ENCODE measurements at regions of chr12 and their contacts with region 1.

Region 1: GRCh38 chr12:51025836-51026638 is at the start of gene SLC11A2:
- DNase-seq: peak; percentile 97
- H3K4me3 Mint-ChIP-seq: peak within 1 kb of the TSS; percentile 95
- H3K27ac Mint-ChIP-seq: peak within 1 kb of the TSS; percentile 99
- H3K4me1 Mint-ChIP-seq: peaks cover 48% of the 10 kb centered on the region
- H3K27me3 Mint-ChIP-seq: peaks cover 4% of the 10 kb centered on the region
- total RNA-seq, gene SLC11A2: 41.4 to 41.6 TPM

Region 2: GRCh38 chr12:49750027-49750995 is 1275.7 kb before region 1 on chr12:
- CTCF ChIA-PET with region 1: no interaction called
- POLR2A ChIA-PET with region 1: no interaction called
- intact Hi-C with region 1: loop called (anchors 10 kb)
- DNase-seq: peak; percentile 77
- H3K4me3 Mint-ChIP-seq: peak overlapping the region; percentile 54
- H3K27ac Mint-ChIP-seq: peak overlapping the region; percentile 92
- H3K4me1 Mint-ChIP-seq: peaks cover 86% of the 10 kb centered on the region
- H3K27me3 Mint-ChIP-seq: no peaks in the 10 kb centered on the region

Region 3: DNA sequence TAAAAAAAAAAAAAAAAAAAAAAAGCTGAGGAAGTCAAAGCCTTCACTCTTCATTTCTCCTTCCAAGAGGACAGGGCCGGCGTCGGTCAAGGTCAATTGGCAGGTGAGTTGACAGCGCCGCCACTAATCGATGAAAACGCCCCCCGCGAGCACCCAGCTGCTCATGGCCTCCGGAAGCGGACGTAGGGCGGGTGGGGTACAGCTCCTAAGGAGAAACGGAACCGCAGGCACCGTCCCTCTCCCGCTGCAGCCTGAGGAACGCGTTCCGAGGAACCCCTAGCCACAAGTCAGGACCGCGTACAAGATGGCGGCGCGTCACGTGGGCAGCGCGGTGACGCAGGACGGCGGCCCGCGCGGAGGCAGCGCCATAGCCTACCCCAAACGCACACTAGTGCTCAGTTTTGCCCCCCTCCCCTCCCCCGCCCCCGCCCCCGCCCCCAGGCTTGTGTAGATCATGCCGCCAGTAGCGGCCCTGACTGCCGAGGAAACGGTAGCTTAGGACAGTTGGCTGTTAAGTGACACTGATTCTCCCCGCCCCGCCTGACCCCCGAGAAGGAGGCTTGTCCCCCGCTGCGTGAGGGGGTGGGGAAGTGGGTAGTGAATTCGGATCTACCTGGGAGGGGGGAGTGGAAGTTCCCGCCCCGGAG is 262.3 kb before region 1 on chr12 and contains the start of gene ATF1:
- CTCF ChIA-PET with region 1: interaction called, 52 read pairs
- POLR2A ChIA-PET with region 1: interaction called, 22 read pairs
- intact Hi-C with region 1: loop called (anchors 1 kb)
- DNase-seq: peak; percentile 94
- H3K4me3 Mint-ChIP-seq: peak within 1 kb of the TSS; percentile 82
- H3K27ac Mint-ChIP-seq: peak within 1 kb of the TSS; percentile 87
- H3K4me1 Mint-ChIP-seq: peaks cover 34% of the 10 kb centered on the region
- H3K27me3 Mint-ChIP-seq: no peaks in the 10 kb centered on the region
- total RNA-seq, gene ATF1: 50.1 to 50.5 TPM

Region 4: DNA sequence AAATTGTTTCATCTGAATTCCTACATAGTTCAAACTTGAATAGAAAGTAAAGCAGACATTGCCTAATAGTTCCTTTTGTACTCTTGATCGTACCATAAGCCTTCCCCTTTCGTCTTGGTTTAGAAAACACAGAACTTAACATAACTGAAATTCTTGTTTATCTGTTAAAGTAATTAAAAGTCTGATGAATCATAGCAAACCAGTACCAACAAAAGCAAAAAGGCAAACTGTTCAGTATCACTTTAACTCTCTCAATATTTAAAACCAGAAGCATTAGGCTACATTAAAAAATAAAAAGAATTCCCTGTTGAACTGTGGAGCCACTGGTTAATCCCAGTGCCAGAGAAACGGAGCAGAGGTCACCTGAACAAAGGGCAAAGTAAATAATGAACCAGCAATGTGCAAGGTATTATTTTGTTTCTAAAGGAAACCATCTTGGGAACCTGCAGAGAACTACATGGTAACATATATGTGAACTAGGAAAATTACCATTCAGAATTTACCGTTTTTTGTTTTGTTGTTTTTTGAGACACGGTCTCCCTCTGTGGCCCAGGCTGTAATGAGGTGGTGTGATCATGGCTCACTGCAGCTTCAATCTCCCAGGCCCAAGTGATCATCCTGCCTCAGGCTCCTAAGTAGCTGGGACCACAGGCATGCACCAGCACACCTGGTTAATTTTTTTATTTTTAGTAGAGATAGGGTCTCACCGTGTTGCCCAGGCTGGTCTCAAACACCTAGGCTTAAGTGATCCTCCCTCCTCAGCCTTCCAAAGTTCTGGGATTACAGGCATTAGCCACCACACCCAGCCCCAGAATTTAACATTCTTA is 90.8 kb before region 1 on chr12:
- CTCF ChIA-PET with region 1: no interaction called
- POLR2A ChIA-PET with region 1: no interaction called
- intact Hi-C with region 1: loop called (anchors 5 kb)
- DNase-seq: no peak
- H3K4me3 Mint-ChIP-seq: no peak overlapping the region
- H3K27ac Mint-ChIP-seq: no peak overlapping the region
- H3K4me1 Mint-ChIP-seq: peaks cover 11% of the 10 kb centered on the region
- H3K27me3 Mint-ChIP-seq: no peaks in the 10 kb centered on the region

Region 5: GRCh38 chr12:50986966-50987737 is 38.9 kb before region 1 on chr12:
- CTCF ChIA-PET with region 1: interaction called, 17 read pairs
- POLR2A ChIA-PET with region 1: interaction called, 20 read pairs
- intact Hi-C with region 1: loop called (anchors 1 kb)
- DNase-seq: peak; percentile 34
- H3K4me3 Mint-ChIP-seq: no peak overlapping the region
- H3K27ac Mint-ChIP-seq: no peak overlapping the region
- H3K4me1 Mint-ChIP-seq: peaks cover 51% of the 10 kb centered on the region
- H3K27me3 Mint-ChIP-seq: no peaks in the 10 kb centered on the region

Region 6: DNA sequence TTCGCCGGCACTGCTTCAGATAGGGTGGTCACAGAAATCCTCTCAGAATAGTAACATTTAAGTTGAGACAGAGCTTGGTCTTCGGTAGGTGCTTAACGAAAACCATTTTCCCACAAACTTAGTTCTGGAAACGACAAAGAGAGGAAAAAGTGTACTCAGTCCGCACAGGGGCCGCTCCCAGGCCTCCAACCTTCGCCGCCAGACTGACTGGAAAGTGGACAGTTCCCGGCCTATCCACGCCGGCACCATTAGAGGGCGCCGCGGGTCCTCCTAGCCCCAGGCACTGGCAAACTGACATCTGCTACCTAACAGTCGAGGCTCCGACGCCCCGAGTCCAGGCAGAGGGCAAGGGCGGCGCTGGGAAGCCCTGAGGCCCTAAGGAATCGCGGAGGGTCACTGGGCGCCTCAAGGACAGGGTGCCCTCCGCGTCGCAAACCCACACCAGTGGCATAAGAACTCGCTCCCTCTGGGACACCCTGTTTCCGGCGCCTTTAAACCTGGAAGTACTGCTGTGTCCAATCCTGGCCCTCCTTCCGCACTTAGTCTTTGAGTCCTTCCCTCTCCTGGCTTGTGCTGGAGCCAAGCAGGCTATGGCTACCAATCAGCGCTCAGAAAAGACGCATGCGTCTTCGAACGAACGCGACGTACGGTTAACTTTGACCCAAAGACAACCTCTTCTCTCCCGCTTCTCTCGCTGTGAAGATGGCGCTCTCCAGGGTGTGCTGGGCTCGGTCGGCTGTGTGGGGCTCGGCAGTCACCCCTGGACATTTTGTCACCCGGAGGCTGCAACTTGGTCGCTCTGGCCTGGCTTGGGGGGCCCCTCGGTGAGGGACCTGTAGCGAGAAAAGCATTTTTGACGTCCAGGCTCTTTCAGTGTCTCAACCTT is 21.9 kb after region 1 on chr12 and contains the start of gene LETMD1:
- CTCF ChIA-PET with region 1: interaction called, 18 read pairs
- POLR2A ChIA-PET with region 1: interaction called, 9 read pairs
- intact Hi-C with region 1: loop called (anchors 1 kb)
- DNase-seq: peak; percentile 95
- H3K4me3 Mint-ChIP-seq: peak within 1 kb of the TSS; percentile 97
- H3K27ac Mint-ChIP-seq: peak within 1 kb of the TSS; percentile 96
- H3K4me1 Mint-ChIP-seq: peaks cover 31% of the 10 kb centered on the region
- H3K27me3 Mint-ChIP-seq: no peaks in the 10 kb centered on the region
- total RNA-seq, gene LETMD1: 79.8 to 84.0 TPM

Region 7: GRCh38 chr12:51238510-51239334 is 212.7 kb after region 1 on chr12 and contains the start of gene DAZAP2:
- CTCF ChIA-PET with region 1: interaction called, 3 read pairs
- POLR2A ChIA-PET with region 1: interaction called, 12 read pairs
- intact Hi-C with region 1: loop called (anchors 2 kb)
- DNase-seq: peak; percentile 97
- H3K4me3 Mint-ChIP-seq: peak within 1 kb of the TSS; percentile 94
- H3K27ac Mint-ChIP-seq: peak within 1 kb of the TSS; percentile 98
- H3K4me1 Mint-ChIP-seq: peaks cover 33% of the 10 kb centered on the region
- H3K27me3 Mint-ChIP-seq: no peaks in the 10 kb centered on the region
- total RNA-seq, gene DAZAP2: 106 to 119 TPM